PC-9 (cell line): ENCODE measurements at regions of chr6 and their contacts with region 1.

Region 1: GRCh38 chr6:31246050-31246521 is 25.8 kb downstream of the HLA-C start:
- DNase-seq: peak; percentile 68 to 98
- H3K4me3 ChIP-seq: no peak overlapping the region
- H3K27ac ChIP-seq: peak overlapping the region; percentile 55
- H3K4me1 ChIP-seq: peaks cover 15% of the 10 kb centered on the region
- H3K27me3 ChIP-seq: no peaks in the 10 kb centered on the region
- CTCF ChIP-seq: no peak

Region 2: DNA sequence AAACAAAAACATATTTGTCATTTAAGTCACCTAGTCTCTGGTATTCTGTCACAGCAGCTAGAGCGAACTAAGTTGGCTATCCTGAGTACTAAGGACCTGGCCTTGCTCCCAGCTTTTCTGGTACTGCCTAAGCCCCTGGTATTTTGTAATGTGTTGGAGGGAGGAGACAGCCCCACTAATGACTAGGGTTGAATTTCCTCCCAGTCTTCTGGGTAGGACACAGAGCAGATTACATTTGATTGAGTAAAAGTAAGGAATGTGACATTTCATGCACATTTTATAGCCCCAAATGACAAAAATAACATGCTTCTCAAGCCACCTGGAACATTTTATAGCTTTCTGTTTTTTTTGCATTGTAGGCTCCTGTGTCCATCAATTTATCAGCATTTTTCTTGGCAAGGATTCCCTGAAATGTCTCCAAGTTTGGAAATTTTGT is 409.6 kb before region 1 on chr6:
- CTCF ChIA-PET with region 1: no interaction called
- POLR2A ChIA-PET with region 1: no interaction called
- intact Hi-C with region 1: no loop called
- DNase-seq: peak in 1 of 2 experiments; percentile 79
- H3K4me3 ChIP-seq: no peak overlapping the region
- H3K27ac ChIP-seq: no peak overlapping the region
- H3K4me1 ChIP-seq: peaks cover 28% of the 10 kb centered on the region
- H3K27me3 ChIP-seq: no peaks in the 10 kb centered on the region
- CTCF ChIP-seq: no peak

Region 3: DNA sequence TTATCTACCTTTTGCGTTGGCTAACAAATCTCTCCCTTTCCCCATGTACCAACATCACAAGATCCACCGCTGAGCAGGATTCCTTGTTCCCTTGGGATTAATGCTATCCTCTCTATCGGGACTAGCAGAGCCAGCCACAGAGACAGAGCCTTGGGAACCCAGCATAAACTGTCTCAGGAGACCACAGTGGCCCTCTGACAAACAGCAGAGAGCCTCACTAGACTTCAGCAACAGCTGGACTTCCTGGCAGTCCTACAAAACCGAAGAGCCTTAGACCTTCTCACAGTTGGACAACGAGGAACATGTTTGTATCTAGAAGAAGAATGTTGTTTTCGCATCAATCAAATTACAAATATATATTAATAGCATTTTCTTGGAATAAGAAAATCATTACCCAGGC is 36.0 kb before region 1 on chr6:
- CTCF ChIA-PET with region 1: no interaction called
- POLR2A ChIA-PET with region 1: no interaction called
- intact Hi-C with region 1: no loop called
- DNase-seq: no peak
- H3K4me3 ChIP-seq: no peak overlapping the region
- H3K27ac ChIP-seq: no peak overlapping the region
- H3K4me1 ChIP-seq: 0 out of 2 replicates have a peak, but pooled peaks cover under 1% of the 10 kb centered on the region
- H3K27me3 ChIP-seq: no peaks in the 10 kb centered on the region
- CTCF ChIP-seq: no peak

Region 4: DNA sequence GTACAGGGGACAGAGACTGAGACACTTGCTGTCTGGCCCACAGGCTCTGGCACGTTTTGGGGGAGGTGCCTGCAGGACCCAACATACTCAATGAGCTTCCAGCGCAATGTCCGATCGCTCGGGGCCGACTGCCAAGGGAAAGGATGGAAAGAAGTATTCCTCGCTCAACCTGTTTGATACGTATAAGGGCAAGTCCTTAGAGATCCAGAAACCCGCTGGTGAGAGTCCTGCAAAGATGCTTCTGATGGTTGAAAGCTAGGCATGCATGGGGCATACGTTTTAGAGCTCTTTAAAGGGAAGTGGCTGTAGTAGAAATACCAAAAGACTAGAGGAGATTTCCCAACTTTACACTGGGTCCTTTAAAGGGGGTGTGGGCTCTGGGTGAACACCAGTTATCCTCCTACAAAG is 376.6 kb after region 1 on chr6:
- CTCF ChIA-PET with region 1: no interaction called
- POLR2A ChIA-PET with region 1: no interaction called
- intact Hi-C with region 1: no loop called
- DNase-seq: no peak
- H3K4me3 ChIP-seq: peak overlapping the region; percentile 87; the same call in 1 of the 2 replicates
- H3K27ac ChIP-seq: no peak overlapping the region
- H3K4me1 ChIP-seq: peaks cover 20% of the 10 kb centered on the region
- H3K27me3 ChIP-seq: no peaks in the 10 kb centered on the region
- CTCF ChIP-seq: no peak

Region 5: DNA sequence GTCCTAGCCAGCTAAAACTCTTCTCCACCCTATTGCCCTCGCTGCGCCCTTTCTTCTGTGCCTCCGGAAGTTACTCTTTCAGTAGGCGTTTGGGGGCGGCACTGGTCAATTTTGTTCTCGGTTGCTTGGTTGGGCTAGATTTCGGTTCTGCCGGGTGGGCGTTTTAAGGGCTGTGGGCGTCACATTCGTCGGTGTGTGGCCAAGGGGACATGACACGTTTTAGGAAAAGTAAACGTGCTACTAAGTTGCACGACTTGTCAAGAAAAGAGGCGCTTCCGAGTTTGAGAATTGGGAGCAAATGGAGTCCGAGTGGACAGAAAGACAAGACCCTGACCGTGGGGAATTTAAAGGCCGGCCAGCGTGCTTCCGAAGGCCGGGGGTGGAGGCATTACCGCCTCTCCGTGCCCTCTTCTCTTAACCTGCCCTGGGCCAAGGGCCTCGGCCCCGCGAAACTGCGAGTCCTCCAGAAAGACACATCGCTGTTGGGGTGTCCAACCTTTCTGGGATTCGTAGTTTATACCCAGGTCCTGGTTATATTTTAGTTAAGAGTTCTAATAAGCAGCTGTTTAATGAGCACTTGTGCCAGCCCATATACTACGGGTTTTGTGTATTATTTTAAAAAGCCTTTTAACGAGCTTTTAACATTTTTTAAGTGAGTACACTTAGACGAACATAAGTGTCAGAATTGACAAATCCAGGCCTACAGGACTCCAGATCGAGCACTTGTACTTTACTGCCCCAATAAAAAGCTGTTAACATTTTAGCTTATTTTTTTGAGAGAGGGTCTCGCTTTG is 407.0 kb after region 1 on chr6:
- CTCF ChIA-PET with region 1: no interaction called
- POLR2A ChIA-PET with region 1: no interaction called
- intact Hi-C with region 1: no loop called
- DNase-seq: peak in 1 of 2 experiments; percentile 86
- H3K4me3 ChIP-seq: peak overlapping the region; percentile 79
- H3K27ac ChIP-seq: peak overlapping the region; percentile 92
- H3K4me1 ChIP-seq: peaks cover 14% of the 10 kb centered on the region
- H3K27me3 ChIP-seq: no peaks in the 10 kb centered on the region
- CTCF ChIP-seq: no peak; the same call in 1 of the 2 replicates

Region 6: DNA sequence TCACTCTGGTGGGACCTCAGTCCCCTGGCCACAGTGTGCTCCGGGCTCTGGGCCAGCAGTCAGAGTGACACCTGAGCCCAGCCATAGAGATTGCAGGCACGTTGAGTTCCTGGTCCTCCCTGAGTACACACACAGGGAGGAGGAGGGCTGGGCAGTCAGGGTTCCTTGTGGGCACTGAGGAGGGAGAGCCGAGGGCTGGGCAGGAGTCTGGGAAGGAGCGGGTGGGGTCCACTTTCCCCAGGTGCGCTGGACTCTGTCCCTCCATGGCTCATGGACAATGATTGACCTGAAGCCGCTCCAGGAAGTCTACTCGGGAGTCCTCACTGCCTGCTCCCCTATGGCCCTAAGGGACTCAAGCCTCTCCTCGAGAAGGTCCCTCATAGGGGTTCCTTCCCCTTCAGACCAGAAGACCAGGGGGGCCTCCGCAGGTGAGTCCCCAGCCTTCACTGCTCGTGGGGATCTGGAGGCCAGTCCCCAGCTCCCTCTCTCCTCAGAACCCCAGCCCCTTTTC is 631.6 kb after region 1 on chr6:
- CTCF ChIA-PET with region 1: no interaction called
- POLR2A ChIA-PET with region 1: interaction called, 10 read pairs
- intact Hi-C with region 1: no loop called
- DNase-seq: peak; percentile 56 to 61
- H3K4me3 ChIP-seq: no peak overlapping the region
- H3K27ac ChIP-seq: no peak overlapping the region
- H3K4me1 ChIP-seq: peaks cover 35% of the 10 kb centered on the region
- H3K27me3 ChIP-seq: no peaks in the 10 kb centered on the region
- CTCF ChIP-seq: no peak